ENCODE measurements at regions of chr2 and their contacts with region 1.

Region 1: DNA sequence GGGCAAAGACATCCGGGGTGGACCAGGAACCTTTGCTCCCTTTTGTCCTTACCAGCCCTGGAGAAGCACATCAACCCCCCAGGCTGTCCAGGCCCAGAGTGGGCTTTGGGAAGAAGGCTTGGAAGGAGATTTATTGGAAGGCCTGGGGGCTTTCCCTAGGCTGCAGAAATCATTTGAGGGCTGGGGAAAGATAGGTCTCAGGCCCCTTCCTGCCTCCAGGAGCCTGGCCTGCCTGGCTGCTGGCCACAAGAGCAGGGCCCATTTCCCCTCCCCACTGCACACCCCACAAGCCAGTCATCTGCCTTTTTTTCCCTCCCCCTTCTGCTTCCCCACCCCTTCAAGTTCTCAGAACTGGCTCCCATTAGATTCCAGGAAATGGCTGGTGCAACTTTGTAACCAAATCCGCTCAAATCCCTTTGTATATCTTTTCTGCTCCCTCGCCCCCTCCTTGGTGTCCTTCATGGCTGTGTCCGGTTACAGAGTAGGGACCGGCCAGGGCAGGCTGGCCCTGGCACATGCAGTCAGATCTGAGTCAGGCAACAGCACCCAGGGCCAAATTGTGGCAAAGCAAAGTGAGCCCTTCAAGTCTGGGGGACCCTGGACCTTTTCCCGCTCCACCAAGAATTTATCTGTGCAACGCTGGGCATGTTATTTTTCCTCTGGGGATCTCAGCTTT is 20.8 kb upstream of the TNP1 start:
- DNase-seq: peak; percentile 79 to 89
- ATAC-seq: peak; percentile 64 to 72
- H3K4me3 ChIP-seq: no peak overlapping the region
- H3K27ac ChIP-seq: peak overlapping the region; percentile 88 to 95 (median 90)
- H3K4me1 ChIP-seq: peaks cover 77 to 84% of the 10 kb centered on the region in 2 donors
- H3K27me3 ChIP-seq: no peaks in the 10 kb centered on the region
- CTCF ChIP-seq: no peak
- POLR2A ChIP-seq: no peak

Region 2: GRCh38 chr2:216735086-216735485 is 145.6 kb before region 1 on chr2:
- in situ Hi-C with region 1: no loop called
- intact Hi-C with region 1: no loop called
- DNase-seq: no peak
- ATAC-seq: peak; percentile 49 to 64
- H3K4me3 ChIP-seq: no peak overlapping the region
- H3K27ac ChIP-seq: peak overlapping the region in 1 of 4 donors; percentile 45
- H3K4me1 ChIP-seq: peaks cover 6 to 18% of the 10 kb centered on the region in 2 donors
- H3K27me3 ChIP-seq: no peaks in the 10 kb centered on the region
- CTCF ChIP-seq: no peak
- POLR2A ChIP-seq: no peak

Region 3: DNA sequence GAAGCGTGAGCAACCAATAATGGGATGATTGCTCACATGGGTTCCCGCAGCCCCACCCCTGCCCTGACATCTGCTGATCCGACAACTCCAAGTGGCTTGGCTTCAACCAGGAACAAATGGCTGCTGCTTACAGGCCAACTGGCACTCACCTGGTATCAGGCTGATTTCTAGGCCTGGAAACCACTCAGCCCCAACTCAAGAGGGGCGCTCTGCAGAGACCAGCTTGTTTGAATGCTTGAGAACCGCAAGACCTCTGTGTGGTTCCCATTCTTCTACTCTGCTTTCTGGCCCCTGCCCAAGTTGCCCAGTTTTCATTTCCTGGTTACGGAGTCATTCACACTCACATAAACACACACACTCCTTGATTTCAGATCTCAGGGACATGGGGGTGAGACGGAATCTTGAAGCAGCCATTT is 72.8 kb before region 1 on chr2:
- in situ Hi-C with region 1: loop called in 3 of 4 experiments (anchors 5 to 10 kb)
- intact Hi-C with region 1: loop called (anchors 2 kb)
- DNase-seq: peak; percentile 74 to 83
- ATAC-seq: peak in 1 of 2 donors; percentile 14
- H3K4me3 ChIP-seq: no peak overlapping the region
- H3K27ac ChIP-seq: peak overlapping the region; percentile 78 to 98 (median 86)
- H3K4me1 ChIP-seq: peaks cover 53 to 62% of the 10 kb centered on the region in 2 donors
- H3K27me3 ChIP-seq: no peaks in the 10 kb centered on the region
- CTCF ChIP-seq: no peak
- POLR2A ChIP-seq: no peak

Region 4: DNA sequence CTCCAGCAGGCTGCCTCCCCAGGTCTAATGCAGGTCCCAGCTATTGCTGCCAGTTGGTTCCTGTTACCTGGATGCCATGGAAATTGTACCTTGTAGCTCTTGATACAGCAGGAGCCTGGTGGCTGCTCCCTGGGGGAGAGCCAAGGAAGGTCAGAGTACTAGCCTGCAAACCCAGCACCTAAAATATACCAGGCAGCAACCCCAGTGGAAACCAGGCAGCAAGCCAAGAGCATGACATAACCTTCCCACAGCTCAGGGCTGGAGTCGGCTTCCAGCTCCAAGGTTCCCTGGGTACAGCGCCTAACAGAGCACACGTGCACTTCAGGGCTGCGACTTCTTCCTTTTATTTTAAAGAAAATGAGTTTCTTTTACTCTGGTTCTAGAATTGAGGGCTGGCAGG is 51.1 kb before region 1 on chr2:
- in situ Hi-C with region 1: no loop called
- intact Hi-C with region 1: loop called (anchors 2 kb)
- DNase-seq: peak; percentile 85 to 92
- ATAC-seq: peak; percentile 95 to 97
- H3K4me3 ChIP-seq: no peak overlapping the region
- H3K27ac ChIP-seq: peak overlapping the region; percentile 45 to 74 (median 53)
- H3K4me1 ChIP-seq: peaks cover 41 to 42% of the 10 kb centered on the region in 2 donors
- H3K27me3 ChIP-seq: no peaks in the 10 kb centered on the region
- CTCF ChIP-seq: no peak
- POLR2A ChIP-seq: no peak

Region 5: DNA sequence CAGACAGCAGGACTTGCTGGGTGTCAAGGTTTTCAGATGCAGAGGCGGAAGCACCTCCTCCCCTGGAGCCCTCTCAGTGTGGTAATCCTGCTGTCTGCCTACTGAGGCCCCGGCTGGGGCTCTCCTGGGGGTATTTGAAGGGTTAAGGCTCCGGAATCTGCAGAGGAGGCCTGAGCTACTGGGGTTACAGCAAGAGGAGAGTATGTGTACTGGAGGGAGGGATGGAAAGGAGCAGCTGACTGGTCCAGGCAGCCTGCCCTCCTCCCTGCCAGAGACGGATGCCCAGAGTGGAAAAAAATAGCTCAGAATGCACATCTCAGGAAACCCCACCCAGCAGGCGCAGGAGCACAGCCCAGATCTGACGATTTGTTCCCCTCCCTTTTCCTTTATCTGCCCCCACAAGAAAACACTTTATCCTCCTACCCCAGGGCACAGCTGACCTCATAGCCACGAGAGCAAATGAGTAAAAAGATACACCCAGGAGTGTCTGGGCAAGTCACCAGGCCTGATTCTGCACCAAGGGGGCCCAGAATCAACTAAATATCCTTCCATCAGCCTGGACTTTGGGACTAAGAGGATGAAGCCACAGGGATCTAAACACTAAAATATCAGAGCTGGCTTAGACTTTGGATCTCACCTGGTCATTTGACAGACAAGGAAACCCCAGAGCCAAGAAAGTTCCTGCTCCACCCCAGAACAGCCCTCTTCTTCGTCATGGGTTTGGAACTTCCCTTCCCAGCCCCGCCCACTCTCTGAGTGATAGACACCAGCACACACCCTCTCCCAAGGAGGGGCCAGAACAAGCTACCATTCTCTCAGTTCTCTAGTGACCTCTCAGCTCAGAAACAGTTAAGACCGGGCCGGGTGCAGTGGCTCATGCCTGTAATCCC is 1406.2 kb after region 1 on chr2:
- in situ Hi-C with region 1: no loop called
- intact Hi-C with region 1: loop called (anchors 10 kb)
- DNase-seq: peak; percentile 92 to 96
- ATAC-seq: peak; percentile 66 to 70
- H3K4me3 ChIP-seq: peak overlapping the region; percentile 59 to 70 (median 61)
- H3K27ac ChIP-seq: peak overlapping the region; percentile 93 to 100 (median 98)
- H3K4me1 ChIP-seq: peaks cover 92 to 97% of the 10 kb centered on the region in 2 donors
- H3K27me3 ChIP-seq: no peaks in the 10 kb centered on the region
- CTCF ChIP-seq: no peak
- POLR2A ChIP-seq: peak; percentile 66 to 69